ENCODE measurements at regions of chr5 and their contacts with region 1.

Region 1: DNA sequence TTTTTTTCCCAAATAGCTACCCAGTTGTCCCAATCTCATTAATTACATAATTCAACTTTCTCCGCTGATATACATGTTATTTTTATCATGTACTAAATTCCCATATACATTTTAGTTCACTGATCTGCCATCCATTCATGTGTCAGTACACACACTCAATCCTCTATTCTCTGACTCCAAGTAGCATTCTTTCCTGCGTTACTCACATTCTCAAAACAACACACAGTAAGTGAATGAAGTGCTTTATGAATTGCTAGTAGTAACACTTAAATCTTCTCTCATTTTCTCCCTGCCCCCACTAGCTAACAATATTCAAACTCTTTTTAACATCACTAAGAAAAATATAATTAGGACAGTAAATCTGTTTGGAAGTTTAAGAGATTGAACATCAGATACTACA is 8.9 kb downstream of the ZNF366 start:
- DNase-seq: no peak
- ATAC-seq: no peak
- H3K4me3 ChIP-seq: no peak overlapping the region
- H3K27ac ChIP-seq: no peak overlapping the region
- H3K4me1 ChIP-seq: no peaks in the 10 kb centered on the region
- H3K27me3 ChIP-seq: no peaks in the 10 kb centered on the region
- CTCF ChIP-seq: no peak
- EP300 ChIP-seq: no peak
- POLR2A ChIP-seq: no peak
- RAD21 ChIP-seq: no peak

Region 2: DNA sequence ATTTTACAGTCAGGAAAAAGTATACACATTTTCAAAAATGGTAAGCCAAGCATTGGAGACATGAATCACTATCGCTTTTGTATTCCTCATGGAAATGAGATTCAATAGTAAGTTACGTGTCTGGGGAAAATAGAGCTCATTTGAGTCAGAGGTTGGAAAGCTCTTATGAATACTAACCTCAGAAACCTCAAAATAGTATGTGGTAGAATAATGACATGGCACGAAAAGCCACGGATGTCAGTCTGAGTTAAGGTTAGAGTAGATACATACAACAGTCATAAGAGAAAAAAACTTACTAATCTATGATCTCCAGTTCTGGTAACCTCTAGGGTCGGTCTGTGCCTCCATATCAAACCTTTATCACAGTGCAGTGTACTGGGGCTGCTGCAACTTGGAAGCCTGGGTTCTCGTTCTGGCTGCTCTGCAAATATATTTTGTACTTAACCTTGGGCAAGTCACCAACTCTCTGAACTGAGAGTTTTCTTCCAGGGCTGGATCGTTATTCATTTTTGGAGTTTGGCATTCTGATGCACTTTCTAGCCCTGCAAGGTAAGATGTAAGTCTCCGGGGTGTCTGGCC is 359.3 kb before region 1 on chr5:
- CTCF ChIA-PET with region 1: no interaction called
- POLR2A ChIA-PET with region 1: no interaction called
- RAD21 ChIA-PET with region 1: no interaction called
- SMC1A ChIA-PET with region 1: no interaction called
- in situ Hi-C with region 1: no loop called
- intact Hi-C with region 1: no loop called
- DNase-seq: peak; percentile 15
- ATAC-seq: peak; percentile 74
- H3K4me3 ChIP-seq: no peak overlapping the region
- H3K27ac ChIP-seq: no peak overlapping the region
- H3K4me1 ChIP-seq: peaks cover 6% of the 10 kb centered on the region; the same call in 1 of the 2 replicates
- H3K27me3 ChIP-seq: peaks cover 0 to 2% of the 10 kb centered on the region in 2 experiments; a peak in 1 of 4 replicates
- CTCF ChIP-seq: no peak
- EP300 ChIP-seq: no peak
- POLR2A ChIP-seq: no peak
- RAD21 ChIP-seq: no peak

Region 3: DNA sequence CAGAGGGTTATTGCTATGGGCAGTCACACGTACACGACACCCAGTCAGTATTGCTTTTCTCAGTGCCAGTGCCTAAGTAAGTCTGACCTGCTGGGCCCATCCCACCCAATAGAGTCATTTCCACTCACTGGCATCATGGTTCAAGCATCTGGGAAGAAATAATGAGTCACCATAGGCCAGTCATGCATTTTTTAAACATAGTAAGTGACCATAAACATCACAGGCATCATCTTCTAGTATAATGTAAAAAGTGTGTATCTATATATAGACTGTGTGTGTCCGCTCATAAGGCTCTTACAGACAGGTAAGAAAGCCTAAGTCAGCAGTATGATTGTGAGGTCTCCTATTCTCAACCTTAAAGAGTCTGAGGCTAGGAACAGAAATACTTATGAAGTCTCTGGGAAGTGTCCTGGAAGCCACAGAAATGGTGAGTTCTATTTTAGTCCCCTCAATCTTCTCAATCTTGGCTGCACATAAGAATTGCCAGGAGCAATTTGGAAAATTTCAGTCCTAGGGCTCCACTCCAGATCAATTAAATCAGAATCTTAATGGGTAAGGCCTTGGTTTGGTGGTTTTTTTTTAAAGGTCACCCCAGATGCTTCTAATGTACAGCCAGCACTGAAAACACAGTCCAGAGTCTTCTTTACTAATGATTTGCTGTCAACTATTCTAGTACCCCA is 56.3 kb before region 1 on chr5:
- CTCF ChIA-PET with region 1: no interaction called
- POLR2A ChIA-PET with region 1: no interaction called
- RAD21 ChIA-PET with region 1: no interaction called
- SMC1A ChIA-PET with region 1: no interaction called
- in situ Hi-C with region 1: no loop called
- intact Hi-C with region 1: no loop called
- DNase-seq: no peak
- ATAC-seq: peak; percentile 13; the same call in 2 of the 3 replicates
- H3K4me3 ChIP-seq: no peak overlapping the region
- H3K27ac ChIP-seq: no peak overlapping the region
- H3K4me1 ChIP-seq: peaks cover 41% of the 10 kb centered on the region
- H3K27me3 ChIP-seq: no peaks in the 10 kb centered on the region
- CTCF ChIP-seq: no peak
- EP300 ChIP-seq: no peak
- POLR2A ChIP-seq: no peak
- RAD21 ChIP-seq: no peak

Region 4: GRCh38 chr5:72478684-72479083 is 19.6 kb before region 1 on chr5:
- CTCF ChIA-PET with region 1: no interaction called
- POLR2A ChIA-PET with region 1: no interaction called
- RAD21 ChIA-PET with region 1: no interaction called
- SMC1A ChIA-PET with region 1: interaction called, 15 read pairs
- in situ Hi-C with region 1: no loop called
- intact Hi-C with region 1: no loop called
- DNase-seq: no peak
- ATAC-seq: no peak
- H3K4me3 ChIP-seq: no peak overlapping the region
- H3K27ac ChIP-seq: no peak overlapping the region
- H3K4me1 ChIP-seq: peaks cover 31% of the 10 kb centered on the region
- H3K27me3 ChIP-seq: no peaks in the 10 kb centered on the region
- CTCF ChIP-seq: no peak
- EP300 ChIP-seq: no peak
- POLR2A ChIP-seq: no peak
- RAD21 ChIP-seq: no peak

Region 5: GRCh38 chr5:72486371-72486770 is 11.9 kb before region 1 on chr5:
- CTCF ChIA-PET with region 1: interaction called, 3 read pairs
- POLR2A ChIA-PET with region 1: interaction called, 8 read pairs
- RAD21 ChIA-PET with region 1: no interaction called
- SMC1A ChIA-PET with region 1: interaction called, 11 read pairs
- in situ Hi-C with region 1: no loop called
- intact Hi-C with region 1: no loop called
- DNase-seq: no peak
- ATAC-seq: no peak
- H3K4me3 ChIP-seq: no peak overlapping the region
- H3K27ac ChIP-seq: no peak overlapping the region
- H3K4me1 ChIP-seq: no peaks in the 10 kb centered on the region
- H3K27me3 ChIP-seq: no peaks in the 10 kb centered on the region
- CTCF ChIP-seq: no peak
- EP300 ChIP-seq: no peak
- POLR2A ChIP-seq: no peak
- RAD21 ChIP-seq: no peak

Region 6: DNA sequence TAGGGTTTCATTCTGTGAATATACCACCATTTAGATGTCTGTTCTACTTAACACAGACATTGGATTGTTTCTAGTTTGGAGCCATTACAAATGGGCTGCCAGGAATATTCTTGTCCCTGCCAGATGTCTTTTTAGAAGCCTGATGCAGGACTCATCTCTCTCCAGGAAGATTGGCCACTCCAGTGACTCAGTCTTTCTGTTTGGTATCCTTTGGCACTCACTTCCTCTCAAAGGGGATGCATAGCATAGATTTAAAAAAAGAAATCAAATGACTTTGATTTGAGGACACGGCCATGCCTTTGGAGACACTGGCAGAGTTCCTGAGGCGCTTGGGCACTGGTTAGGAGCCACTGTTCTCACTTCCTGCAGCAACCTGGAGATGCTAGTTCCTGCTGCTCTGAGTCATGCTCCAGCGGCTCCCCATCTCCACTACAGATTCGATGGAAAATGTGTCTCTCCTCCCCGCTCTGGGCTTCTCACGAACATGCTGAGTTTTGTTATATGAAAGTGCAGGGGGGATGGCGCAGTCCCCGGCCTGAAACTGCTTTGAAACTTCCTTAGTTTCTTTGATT is 12.4 kb after region 1 on chr5:
- CTCF ChIA-PET with region 1: interaction called, 3 read pairs
- POLR2A ChIA-PET with region 1: no interaction called
- RAD21 ChIA-PET with region 1: interaction called, 3 read pairs
- SMC1A ChIA-PET with region 1: interaction called, 37 read pairs
- in situ Hi-C with region 1: no loop called
- intact Hi-C with region 1: no loop called
- DNase-seq: no peak
- ATAC-seq: no peak
- H3K4me3 ChIP-seq: no peak overlapping the region
- H3K27ac ChIP-seq: peak overlapping the region; percentile 33
- H3K4me1 ChIP-seq: peaks cover 45% of the 10 kb centered on the region
- H3K27me3 ChIP-seq: no peaks in the 10 kb centered on the region
- CTCF ChIP-seq: no peak
- EP300 ChIP-seq: no peak
- POLR2A ChIP-seq: no peak
- RAD21 ChIP-seq: no peak

Region 7: GRCh38 chr5:72692231-72692637 is 193.9 kb after region 1 on chr5:
- CTCF ChIA-PET with region 1: no interaction called
- POLR2A ChIA-PET with region 1: no interaction called
- RAD21 ChIA-PET with region 1: no interaction called
- SMC1A ChIA-PET with region 1: no interaction called
- in situ Hi-C with region 1: no loop called
- intact Hi-C with region 1: no loop called
- DNase-seq: no peak
- ATAC-seq: no peak
- H3K4me3 ChIP-seq: no peak overlapping the region
- H3K27ac ChIP-seq: no peak overlapping the region
- H3K4me1 ChIP-seq: no peaks in the 10 kb centered on the region
- H3K27me3 ChIP-seq: peaks cover 0 to 2% of the 10 kb centered on the region in 2 experiments; a peak in 2 of 4 replicates
- CTCF ChIP-seq: no peak
- EP300 ChIP-seq: no peak
- POLR2A ChIP-seq: no peak
- RAD21 ChIP-seq: no peak